Activated CD4-positive, alpha-beta T cell treated with anti-CD3 and anti-CD28 coated beads for 36 hours (primary cell): ENCODE measurements at regions of chr2 and their contacts with region 1.

Region 1: GRCh38 chr2:46364797-46365457 is 67.7 kb downstream of the EPAS1 start:
- DNase-seq: peak; percentile 49
- ATAC-seq: no peak
- H3K4me3 Mint-ChIP-seq: no peak overlapping the region
- H3K27ac Mint-ChIP-seq: no peak overlapping the region
- H3K4me1 Mint-ChIP-seq: peaks cover 31% of the 10 kb centered on the region
- H3K27me3 Mint-ChIP-seq: no peaks in the 10 kb centered on the region

Region 2: GRCh38 chr2:45643543-45644542 is 721.1 kb before region 1 on chr2:
- CTCF ChIA-PET with region 1: no interaction called
- POLR2A ChIA-PET with region 1: no interaction called
- intact Hi-C with region 1: loop called in 1 of 2 experiments (anchors 5 kb)
- DNase-seq: peak; percentile 84
- ATAC-seq: peak; percentile 99
- H3K4me3 Mint-ChIP-seq: peak overlapping the region; percentile 32
- H3K27ac Mint-ChIP-seq: no peak overlapping the region
- H3K4me1 Mint-ChIP-seq: peaks cover 3% of the 10 kb centered on the region
- H3K27me3 Mint-ChIP-seq: peaks cover 20% of the 10 kb centered on the region

Region 3: DNA sequence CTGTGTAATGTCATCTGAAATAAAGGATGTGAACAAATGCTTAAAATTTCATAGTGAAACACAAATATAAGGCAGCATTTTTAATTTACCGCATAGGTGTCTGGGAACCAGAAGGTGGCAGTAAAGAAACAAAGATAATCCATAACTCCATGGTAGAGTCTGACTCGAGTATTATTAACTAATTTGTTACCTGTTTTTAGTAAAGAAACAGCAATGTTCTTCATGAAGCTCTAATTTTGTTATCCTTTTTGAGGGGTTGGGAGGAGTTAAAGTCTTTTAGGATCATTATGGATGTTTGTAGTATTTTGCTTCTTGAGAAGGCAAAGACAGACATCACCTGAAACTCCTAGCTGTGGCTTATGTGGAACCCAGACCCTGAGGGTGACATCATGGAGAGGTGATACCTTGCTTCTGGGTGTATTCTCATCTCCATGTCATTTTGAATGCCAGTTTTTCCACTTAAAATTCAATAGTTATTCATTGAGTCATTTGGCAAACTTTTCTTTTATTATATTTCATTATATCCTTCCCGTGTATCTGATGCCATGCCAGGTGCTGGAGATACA is 353.9 kb before region 1 on chr2:
- CTCF ChIA-PET with region 1: interaction called, 10 read pairs
- POLR2A ChIA-PET with region 1: no interaction called
- intact Hi-C with region 1: loop called (anchors 1 kb)
- DNase-seq: no peak
- ATAC-seq: peak; percentile 74
- H3K4me3 Mint-ChIP-seq: no peak overlapping the region
- H3K27ac Mint-ChIP-seq: no peak overlapping the region
- H3K4me1 Mint-ChIP-seq: no peaks in the 10 kb centered on the region
- H3K27me3 Mint-ChIP-seq: no peaks in the 10 kb centered on the region

Region 4: GRCh38 chr2:46187112-46187618 is 177.8 kb before region 1 on chr2:
- CTCF ChIA-PET with region 1: no interaction called
- POLR2A ChIA-PET with region 1: no interaction called
- intact Hi-C with region 1: loop called in 1 of 2 experiments (anchors 2 kb)
- DNase-seq: peak; percentile 65
- ATAC-seq: peak; percentile 99
- H3K4me3 Mint-ChIP-seq: no peak overlapping the region
- H3K27ac Mint-ChIP-seq: peak overlapping the region; percentile 85
- H3K4me1 Mint-ChIP-seq: peaks cover 13% of the 10 kb centered on the region
- H3K27me3 Mint-ChIP-seq: no peaks in the 10 kb centered on the region

Region 5: DNA sequence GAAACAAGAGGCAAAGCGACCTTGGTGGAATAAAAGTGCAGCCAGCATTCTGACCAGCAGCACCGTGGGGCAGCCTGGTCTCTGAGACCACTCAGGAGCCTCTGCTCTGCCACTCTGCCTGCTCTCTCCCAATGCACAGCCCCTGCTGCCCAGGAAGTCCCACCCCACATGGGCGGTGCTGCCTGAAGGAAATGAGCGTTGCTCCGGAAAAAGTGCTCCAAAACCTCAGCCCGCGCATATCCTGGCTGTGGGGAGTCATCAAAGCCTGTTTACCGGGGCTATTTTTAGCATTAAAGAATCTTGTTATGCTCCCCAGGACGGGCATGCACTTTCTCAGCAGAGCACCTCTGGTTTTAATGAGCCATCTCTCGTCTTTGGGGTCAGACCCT is 13.2 kb before region 1 on chr2:
- CTCF ChIA-PET with region 1: interaction called, 11 read pairs
- POLR2A ChIA-PET with region 1: no interaction called
- intact Hi-C with region 1: no loop called
- DNase-seq: peak; percentile 84
- ATAC-seq: peak; percentile 93
- H3K4me3 Mint-ChIP-seq: peak overlapping the region; percentile 74
- H3K27ac Mint-ChIP-seq: peak overlapping the region; percentile 91
- H3K4me1 Mint-ChIP-seq: peaks cover 76% of the 10 kb centered on the region
- H3K27me3 Mint-ChIP-seq: no peaks in the 10 kb centered on the region